ENCODE measurements at regions of chr2 and their contacts with region 1.

Region 1: GRCh38 chr2:135985018-135985825 is at the start of gene DARS1:
- DNase-seq: peak; percentile 73 to 98 (median 86)

Region 2: DNA sequence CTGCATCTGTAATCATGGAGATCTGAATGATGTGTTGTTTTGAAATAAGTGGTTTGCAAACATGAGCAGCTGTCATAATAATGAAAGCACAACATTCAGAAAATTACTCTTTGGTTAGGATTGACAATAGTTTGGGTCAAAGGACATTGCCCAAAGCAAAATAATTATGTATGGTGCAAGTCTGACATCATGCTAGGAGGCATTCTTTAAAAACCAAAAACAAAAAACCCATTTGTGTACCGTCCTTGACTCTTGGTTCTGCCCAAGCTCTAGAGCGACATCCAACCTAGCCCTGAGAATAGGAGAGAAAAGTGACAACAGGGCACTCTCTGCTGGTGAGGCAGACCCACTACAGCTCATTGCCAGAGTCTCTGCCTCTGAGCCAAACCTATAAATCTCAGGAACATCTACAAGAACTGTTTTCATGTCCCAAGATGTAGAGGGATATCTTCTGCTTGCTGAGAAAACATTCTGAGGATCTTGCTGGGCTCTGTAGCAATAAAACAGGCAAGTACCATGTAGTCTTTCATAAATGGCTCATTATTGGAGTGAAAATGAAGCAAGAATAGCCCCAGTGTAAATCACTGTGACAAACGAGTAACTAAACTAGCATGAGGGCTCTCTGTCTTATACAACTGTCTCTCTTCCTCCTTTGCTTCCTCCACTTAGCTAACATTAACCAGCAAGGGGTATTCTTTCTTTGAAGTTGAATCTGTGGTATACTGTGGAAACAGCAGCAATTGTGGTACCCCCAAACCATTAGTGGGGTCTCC is 399.5 kb after region 1 on chr2:
- intact Hi-C with region 1: loop called (anchors 10 kb)
- DNase-seq: peak in 4 of 10 donors; percentile 24 to 37 (median 26)

Region 3: GRCh38 chr2:136550181-136550580 is 565.0 kb after region 1 on chr2:
- intact Hi-C with region 1: no loop called
- DNase-seq: no peak